Tibial artery (tissue), 4 donors: ENCODE measurements at regions of chr11 and their contacts with region 1.

Region 1: GRCh38 chr11:117064275-117064674 is 34.0 kb downstream of the SIK3 start:
- DNase-seq: no peak
- H3K4me3 ChIP-seq: no peak overlapping the region
- H3K27ac ChIP-seq: no peak overlapping the region
- H3K4me1 ChIP-seq: peaks cover 0 to 30% (median 9%) of the 10 kb centered on the region in 4 donors
- H3K27me3 ChIP-seq: no peaks in the 10 kb centered on the region
- CTCF ChIP-seq: no peak

Region 2: DNA sequence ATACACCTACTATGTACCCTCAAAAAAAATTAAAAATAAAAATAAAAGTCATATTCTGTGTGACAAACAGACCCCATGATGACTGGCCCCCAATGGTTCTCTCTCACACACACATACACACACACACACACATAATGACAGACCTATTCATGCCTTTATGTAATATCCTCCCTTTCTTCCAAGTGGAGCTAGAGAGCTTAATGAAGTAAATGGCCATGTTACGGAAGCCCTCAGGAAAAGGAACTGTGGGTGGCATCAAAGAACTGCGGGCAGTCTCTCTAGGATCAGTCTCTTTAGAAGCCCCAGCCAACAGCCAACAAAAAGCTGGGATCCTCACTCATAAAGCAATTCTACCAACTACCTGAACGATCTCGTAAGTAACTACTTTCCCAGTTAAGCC is 91.6 kb before region 1 on chr11:
- intact Hi-C with region 1: loop called (anchors 10 kb)
- DNase-seq: no peak
- H3K4me3 ChIP-seq: no peak overlapping the region
- H3K27ac ChIP-seq: no peak overlapping the region
- H3K4me1 ChIP-seq: peaks cover 0 to 9% (median 0%) of the 10 kb centered on the region in 4 donors
- H3K27me3 ChIP-seq: no peaks in the 10 kb centered on the region
- CTCF ChIP-seq: no peak